Cardiac septum (tissue), 1 donor: ENCODE measurements at regions of chr3 and their contacts with region 1.

Region 1: GRCh38 chr3:40580494-40581091 is 55.8 kb downstream of the ZNF621 start:
- DNase-seq: no peak

Region 2: DNA sequence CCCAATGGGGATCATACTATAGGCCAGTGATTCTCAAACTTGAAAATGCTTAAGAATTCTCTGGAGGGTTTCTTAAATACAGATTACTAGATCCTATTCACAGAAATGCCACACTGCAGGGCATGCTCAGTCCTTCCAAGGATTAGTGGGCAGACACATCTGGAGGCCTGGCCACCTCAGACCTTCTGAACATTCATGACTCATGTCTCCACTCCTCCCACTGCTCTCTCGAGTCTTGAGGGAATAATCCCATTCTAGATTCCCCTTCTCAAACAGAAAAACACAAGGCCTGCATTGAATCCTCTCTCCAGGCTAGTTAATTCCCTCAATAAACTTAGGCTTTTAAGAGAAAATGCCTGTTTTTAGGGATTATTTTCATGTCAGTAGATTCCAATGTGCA is 33.8 kb before region 1 on chr3:
- intact Hi-C with region 1: no loop called
- DNase-seq: no peak

Region 3: DNA sequence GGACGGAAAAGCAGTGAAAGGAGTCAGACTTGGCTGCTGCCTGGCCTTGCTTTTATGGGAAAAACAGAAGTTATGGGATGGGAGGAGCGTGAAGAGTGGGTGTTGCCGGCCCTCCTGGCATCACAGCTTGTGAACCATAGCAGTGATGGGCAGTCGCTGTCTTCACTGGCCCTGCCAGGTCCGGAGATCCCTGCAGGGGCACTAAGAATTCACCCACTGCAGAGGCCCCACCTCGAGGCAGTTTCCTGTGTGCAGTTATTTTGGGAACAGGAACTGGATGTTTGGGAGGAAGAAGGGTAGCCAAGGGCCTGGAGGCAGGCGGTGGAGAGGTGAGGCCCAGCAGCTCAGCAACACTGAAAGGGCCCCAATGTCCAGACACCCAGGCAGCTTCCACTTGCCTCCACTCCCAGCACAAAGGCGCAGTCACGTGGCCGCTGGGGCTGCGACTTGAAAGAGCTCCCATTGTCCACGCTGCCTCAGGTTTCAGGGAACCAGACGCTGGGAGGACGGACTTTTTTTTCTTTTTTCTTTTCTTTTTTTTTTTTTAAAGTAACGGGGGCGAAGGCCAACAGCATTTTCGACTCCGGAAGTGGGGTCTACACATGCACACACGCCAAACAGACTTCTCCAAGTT is 199.8 kb after region 1 on chr3:
- intact Hi-C with region 1: loop called (anchors 2 kb)
- DNase-seq: peak; percentile 89

Region 4: DNA sequence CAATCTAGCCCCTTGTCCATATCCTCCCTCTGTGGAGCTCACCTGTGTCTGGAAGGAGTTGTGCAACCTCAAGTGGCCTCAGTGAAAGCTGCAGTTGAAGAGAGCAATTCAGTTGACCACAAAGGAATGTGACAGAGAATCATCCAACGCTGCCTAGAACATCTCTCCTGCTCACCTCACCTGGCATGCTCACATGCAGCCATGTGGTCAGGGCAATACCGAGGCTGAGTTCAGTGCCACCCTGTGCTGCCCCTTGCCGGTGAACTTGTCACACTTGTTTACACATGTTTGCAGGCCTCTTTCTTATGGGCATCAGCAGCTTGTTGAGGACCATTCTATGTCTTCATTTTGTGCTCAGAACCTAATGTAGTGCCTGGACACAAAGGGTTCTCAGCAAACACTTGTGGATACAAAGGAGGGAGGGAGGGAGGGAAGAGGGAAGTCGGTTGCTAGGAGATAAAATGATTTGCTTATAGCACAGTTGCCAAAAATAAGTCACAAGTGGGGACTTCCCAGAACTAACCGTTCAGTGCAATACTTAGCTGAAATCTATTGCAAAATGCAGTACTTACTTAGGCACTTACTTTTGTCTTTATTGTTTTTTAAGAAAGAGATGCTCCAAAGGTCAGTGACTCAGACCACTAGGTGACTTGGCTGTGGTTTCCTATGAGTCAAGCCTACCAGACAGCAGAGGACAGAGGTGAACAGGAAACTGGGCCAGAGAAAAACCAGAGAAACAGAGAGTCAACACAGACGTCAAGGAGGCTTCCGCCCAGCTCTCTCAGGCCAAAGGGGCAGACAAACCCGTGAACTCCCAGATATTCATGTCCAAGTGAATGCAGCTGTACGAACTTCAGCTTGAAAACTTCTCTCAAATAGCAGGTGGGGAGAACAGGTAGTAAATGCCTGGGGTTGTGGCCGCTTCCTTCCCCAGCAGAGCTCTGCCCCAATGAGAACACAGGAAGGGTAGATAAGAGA is 390.9 kb after region 1 on chr3:
- intact Hi-C with region 1: loop called (anchors 5 kb)
- DNase-seq: no peak

Region 5: DNA sequence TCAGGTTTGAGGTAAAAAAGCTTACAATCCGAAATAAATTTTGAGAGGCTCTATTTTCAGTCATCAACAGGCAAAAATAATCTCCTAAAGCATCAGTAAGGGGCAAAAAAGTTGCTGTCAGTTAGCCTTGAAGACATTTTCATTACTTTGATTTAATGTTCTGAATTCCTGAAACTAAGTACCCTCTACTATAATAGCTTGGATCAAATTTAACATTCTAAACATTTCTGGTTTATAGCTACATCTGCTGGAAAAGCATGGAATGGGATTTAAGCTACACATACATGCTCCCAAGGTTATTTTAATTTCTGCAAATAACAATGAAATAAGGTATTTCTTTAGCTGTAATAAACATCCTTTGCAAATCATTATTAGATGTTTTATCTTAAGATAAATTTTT is 1135.9 kb after region 1 on chr3:
- intact Hi-C with region 1: loop called (anchors 5 kb)
- DNase-seq: no peak